ENCODE measurements at regions of chr1 and their contacts with region 1.

Region 1: DNA sequence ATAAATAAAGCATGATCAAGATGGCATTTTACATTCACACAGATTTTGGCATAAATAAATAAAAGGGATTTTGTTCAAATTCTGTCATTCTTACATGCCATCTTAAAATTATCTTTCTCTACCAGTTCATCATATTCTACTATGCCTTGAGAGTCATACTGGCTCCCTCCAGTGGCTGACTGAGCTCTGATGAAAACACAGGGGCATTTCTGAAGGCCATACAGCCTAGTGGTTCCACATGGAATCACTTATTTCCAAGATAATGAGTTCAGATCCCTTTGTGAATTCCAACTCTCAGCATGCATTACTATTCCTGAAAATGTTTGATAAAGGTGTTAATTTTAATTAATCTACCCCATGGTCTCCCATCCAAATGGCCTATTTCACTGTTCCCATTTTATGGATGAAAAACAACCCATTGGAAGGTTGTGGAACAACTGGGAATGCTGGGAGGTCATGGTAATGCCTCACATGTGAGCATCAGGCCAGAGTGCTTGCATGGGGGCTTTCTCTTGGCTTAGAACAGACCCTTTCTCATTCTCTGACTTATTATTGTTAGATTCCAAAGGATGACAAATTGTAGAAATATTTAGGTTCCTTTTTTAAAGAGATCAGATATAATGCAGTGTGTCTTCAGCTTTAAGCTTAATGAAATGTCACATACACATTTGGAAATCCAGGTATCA is 622.4 kb upstream of the PKN2 start:
- DNase-seq: peak; percentile 45
- ATAC-seq: peak; percentile 95
- H3K4me3 ChIP-seq: no peak overlapping the region
- H3K27ac ChIP-seq: no peak overlapping the region
- H3K4me1 ChIP-seq: no peaks in the 10 kb centered on the region
- H3K27me3 ChIP-seq: no peaks in the 10 kb centered on the region
- CTCF ChIP-seq: peak; percentile 64
- EP300 ChIP-seq: no peak
- POLR2A ChIP-seq: no peak
- RAD21 ChIP-seq: 0 out of 2 replicates have a peak, but pooled peaks have one; percentile 33

Region 2: DNA sequence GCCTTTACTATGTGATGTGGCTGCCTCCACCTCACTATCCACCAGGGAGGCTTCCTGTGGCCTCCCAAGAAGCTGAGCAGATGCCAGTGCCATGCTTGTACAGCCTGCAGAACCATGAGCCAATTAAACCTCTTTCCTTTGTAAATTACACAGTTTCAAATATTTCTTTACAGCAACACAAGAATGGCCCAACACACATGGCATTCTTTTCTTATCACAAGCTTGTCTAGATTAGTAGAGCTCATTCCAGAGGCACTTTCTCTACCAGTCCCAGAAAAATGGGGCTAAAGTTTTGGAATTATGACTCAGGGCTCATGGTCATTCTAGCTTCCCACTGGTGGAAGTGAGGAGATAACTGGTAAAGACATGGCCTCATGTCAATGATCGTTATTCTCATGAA is 77.8 kb before region 1 on chr1:
- CTCF ChIA-PET with region 1: no interaction called
- POLR2A ChIA-PET with region 1: no interaction called
- in situ Hi-C with region 1: no loop called
- intact Hi-C with region 1: loop called (anchors 2 kb)
- DNase-seq: no peak
- ATAC-seq: no peak
- H3K4me3 ChIP-seq: no peak overlapping the region
- H3K27ac ChIP-seq: no peak overlapping the region
- H3K4me1 ChIP-seq: no peaks in the 10 kb centered on the region
- H3K27me3 ChIP-seq: peaks cover 0 to 4% of the 10 kb centered on the region in 2 experiments; a peak in 1 of 5 replicates
- CTCF ChIP-seq: no peak
- EP300 ChIP-seq: no peak
- POLR2A ChIP-seq: no peak
- RAD21 ChIP-seq: no peak